Activated T-helper 1 cell treated with anti-CD3 and anti-CD28 coated beads, Interleukin-12 subunit alpha, Interleukin-12 subunit beta, Interleukin-2, Interleukin-4 antibody, amounts not matched to agents 30 ng/mL and 10 ng/mL and 1 ng/mL, durations not matched to agents 14 hours and 24 hours and 36 hours (primary cell): ENCODE measurements at regions of chr5 and their contacts with region 1.

Region 1: GRCh38 chr5:160199410-160199911 is 29.8 kb upstream of the FABP6 start:
- DNase-seq: peak; percentile 58
- H3K4me3 Mint-ChIP-seq: peak overlapping the region; percentile 68
- H3K27ac Mint-ChIP-seq: no peak overlapping the region
- H3K4me1 Mint-ChIP-seq: peaks cover 4% of the 10 kb centered on the region
- H3K27me3 Mint-ChIP-seq: peaks cover 14% of the 10 kb centered on the region

Region 2: GRCh38 chr5:160021831-160022446 is 177.5 kb before region 1 on chr5:
- intact Hi-C with region 1: loop called (anchors 1 kb)
- DNase-seq: peak; percentile 37
- H3K4me3 Mint-ChIP-seq: no peak overlapping the region
- H3K27ac Mint-ChIP-seq: no peak overlapping the region
- H3K4me1 Mint-ChIP-seq: peaks cover 19% of the 10 kb centered on the region
- H3K27me3 Mint-ChIP-seq: no peaks in the 10 kb centered on the region

Region 3: DNA sequence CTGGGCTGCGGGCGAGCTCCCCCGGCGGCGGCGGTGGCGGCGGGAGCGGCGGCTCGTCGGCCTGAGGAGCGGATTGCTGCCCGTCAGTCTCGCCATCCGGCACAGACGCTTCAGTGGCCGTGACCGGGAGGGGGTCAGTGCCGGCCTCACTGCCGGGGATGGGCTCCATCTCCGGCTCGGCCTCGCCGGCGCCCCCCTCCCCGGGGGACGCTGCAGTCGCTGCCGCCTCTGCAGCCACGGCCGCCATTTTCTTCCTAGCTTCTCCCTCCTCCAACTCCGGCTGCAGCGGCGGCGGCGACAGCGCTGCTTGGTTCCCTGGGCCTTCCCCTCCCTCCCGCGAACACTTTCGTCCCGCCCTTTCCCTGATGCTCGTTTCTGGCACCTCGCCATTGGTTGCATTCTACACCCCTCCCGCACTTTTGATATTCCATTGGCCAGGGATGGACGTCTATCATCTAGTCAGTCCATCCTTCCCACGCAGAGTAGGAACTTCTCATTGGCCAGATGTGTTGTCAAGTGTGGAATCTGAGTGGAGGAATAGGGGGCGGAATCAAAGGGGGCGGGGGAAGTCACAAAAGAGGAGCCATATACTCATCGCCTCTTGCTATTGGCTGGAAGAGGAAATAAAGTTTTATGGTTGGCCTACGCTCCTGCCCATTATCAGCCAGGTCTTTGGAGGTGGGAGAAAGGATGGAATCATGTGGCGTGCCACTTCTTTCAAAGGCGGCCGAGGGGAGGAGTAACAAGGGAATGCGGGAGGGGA is 80.1 kb before region 1 on chr5 and contains the start of gene PWWP2A:
- intact Hi-C with region 1: loop called (anchors 5 kb)
- DNase-seq: peak; percentile 96
- H3K4me3 Mint-ChIP-seq: peak within 1 kb of the TSS; percentile 95
- H3K27ac Mint-ChIP-seq: peak within 1 kb of the TSS; percentile 96
- H3K4me1 Mint-ChIP-seq: peaks cover 15% of the 10 kb centered on the region
- H3K27me3 Mint-ChIP-seq: peaks cover 4% of the 10 kb centered on the region
- total RNA-seq, gene PWWP2A: 29.7 and 30.2 TPM in 2 replicates

Region 4: GRCh38 chr5:160152287-160152686 is 47.2 kb before region 1 on chr5:
- intact Hi-C with region 1: no loop called
- DNase-seq: no peak
- H3K4me3 Mint-ChIP-seq: no peak overlapping the region
- H3K27ac Mint-ChIP-seq: no peak overlapping the region
- H3K4me1 Mint-ChIP-seq: no peaks in the 10 kb centered on the region
- H3K27me3 Mint-ChIP-seq: peaks cover 2% of the 10 kb centered on the region

Region 5: DNA sequence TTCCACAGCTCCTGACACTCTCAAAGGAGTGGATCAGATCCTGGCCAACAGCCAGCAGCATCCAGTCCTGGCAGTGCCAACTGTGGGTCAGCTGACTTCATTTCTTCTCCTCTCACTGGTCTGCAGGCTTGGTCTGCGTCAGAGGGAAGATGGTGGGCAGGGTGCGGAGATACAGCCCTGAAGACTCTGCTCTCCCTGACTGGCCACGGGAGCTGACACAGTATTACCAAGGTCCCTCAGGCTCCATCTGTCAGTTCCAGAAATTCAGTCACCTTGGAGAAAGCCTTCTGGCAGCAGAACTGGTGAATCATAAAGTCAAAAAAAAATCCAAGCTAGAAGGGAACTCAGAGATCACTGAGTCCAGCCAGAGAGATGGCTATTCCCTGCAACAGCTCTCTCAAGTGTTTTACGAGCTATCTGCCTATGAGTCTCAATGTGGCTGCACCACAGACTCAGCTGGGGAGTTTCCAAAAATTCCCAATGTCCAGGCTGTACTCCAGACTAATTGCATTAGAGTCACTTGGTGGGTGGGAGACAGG is 143.0 kb after region 1 on chr5:
- intact Hi-C with region 1: loop called (anchors 1 kb)
- DNase-seq: no peak
- H3K4me3 Mint-ChIP-seq: no peak overlapping the region
- H3K27ac Mint-ChIP-seq: no peak overlapping the region
- H3K4me1 Mint-ChIP-seq: peaks cover 4% of the 10 kb centered on the region
- H3K27me3 Mint-ChIP-seq: peaks cover 9% of the 10 kb centered on the region

Region 6: GRCh38 chr5:160390787-160391696 is 191.6 kb after region 1 on chr5:
- intact Hi-C with region 1: loop called (anchors 1 kb)
- DNase-seq: no peak
- H3K4me3 Mint-ChIP-seq: no peak overlapping the region
- H3K27ac Mint-ChIP-seq: no peak overlapping the region
- H3K4me1 Mint-ChIP-seq: no peaks in the 10 kb centered on the region
- H3K27me3 Mint-ChIP-seq: peaks cover 4% of the 10 kb centered on the region